Mammary epithelial cell (primary cell): ENCODE measurements at regions of chr10 and their contacts with region 1.

Region 1: DNA sequence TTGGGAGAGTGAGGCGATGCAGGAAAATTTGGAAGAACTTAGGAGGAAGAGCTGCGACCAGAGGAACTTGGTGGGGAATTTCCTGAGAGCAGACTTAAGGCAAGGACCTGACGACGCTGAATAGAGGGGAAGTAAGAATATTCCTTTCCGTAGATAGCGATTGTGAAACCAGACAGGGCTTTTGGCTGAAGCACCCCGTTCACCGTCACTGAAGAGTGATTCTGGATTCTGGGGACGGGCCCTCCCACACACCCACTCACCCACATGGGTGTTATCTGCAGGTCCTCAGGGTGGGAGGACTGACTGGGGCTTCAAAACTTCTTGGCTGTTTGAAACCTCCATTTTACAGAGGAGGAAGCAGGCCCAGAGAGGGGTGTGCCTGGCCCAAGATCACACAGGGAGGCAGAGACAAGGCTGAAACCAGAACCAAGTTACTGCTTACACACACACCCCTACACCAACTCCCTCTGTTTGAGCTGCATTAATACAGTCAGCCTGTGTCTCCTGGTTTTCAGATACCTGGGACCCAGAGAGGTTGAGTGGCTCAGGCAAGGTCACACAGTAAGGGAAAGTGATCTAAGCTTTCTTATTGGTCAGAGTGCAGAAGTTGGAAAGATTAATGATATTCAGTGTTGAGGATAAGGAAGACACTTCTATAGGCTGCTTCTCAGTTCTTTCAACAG is 37.2 kb upstream of the CDH23 start:
- DNase-seq: no peak
- H3K4me3 ChIP-seq: no peak overlapping the region
- H3K27ac ChIP-seq: no peak overlapping the region
- H3K4me1 ChIP-seq: peaks cover 8% of the 10 kb centered on the region
- H3K27me3 ChIP-seq: no peaks in the 10 kb centered on the region
- CTCF ChIP-seq: no peak

Region 2: DNA sequence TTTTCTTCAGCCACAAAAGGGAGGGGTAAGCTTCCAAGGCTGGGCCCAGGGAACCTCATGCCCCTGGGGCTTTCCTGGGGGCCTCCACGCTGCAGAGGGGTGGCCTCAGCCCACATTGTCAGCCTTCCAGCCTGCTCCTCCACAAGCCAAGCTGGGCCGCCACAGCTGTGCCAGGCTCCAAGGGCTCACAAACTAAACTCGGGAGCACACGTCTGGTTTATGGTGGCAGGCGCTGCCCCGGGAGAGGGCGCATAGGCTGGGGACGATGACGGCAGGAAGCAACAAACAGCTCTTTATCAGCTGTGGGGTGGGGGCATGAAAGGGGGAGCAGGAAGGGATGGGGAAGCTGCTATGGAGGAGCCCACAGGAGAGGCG is 30.9 kb after region 1 on chr10:
- CTCF ChIA-PET with region 1: no interaction called
- dilution Hi-C with region 1: loop called (anchors 5 kb)
- in situ Hi-C with region 1: no loop called
- intact Hi-C with region 1: no loop called
- DNase-seq: no peak
- H3K4me3 ChIP-seq: no peak overlapping the region
- H3K27ac ChIP-seq: no peak overlapping the region
- H3K4me1 ChIP-seq: no peaks in the 10 kb centered on the region
- H3K27me3 ChIP-seq: no peaks in the 10 kb centered on the region
- CTCF ChIP-seq: no peak

Region 3: GRCh38 chr10:71465551-71466252 is 106.2 kb after region 1 on chr10:
- CTCF ChIA-PET with region 1: no interaction called
- dilution Hi-C with region 1: loop called (anchors 5 kb)
- in situ Hi-C with region 1: no loop called
- intact Hi-C with region 1: no loop called
- DNase-seq: no peak
- H3K4me3 ChIP-seq: no peak overlapping the region
- H3K27ac ChIP-seq: no peak overlapping the region
- H3K4me1 ChIP-seq: no peaks in the 10 kb centered on the region
- H3K27me3 ChIP-seq: no peaks in the 10 kb centered on the region
- CTCF ChIP-seq: no peak

Region 4: GRCh38 chr10:71888623-71889387 is 529.3 kb after region 1 on chr10:
- CTCF ChIA-PET with region 1: no interaction called
- dilution Hi-C with region 1: loop called (anchors 25 kb)
- in situ Hi-C with region 1: no loop called
- intact Hi-C with region 1: no loop called
- DNase-seq: peak; percentile 78
- H3K4me3 ChIP-seq: peak overlapping the region; percentile 56 to 59 (median 56)
- H3K27ac ChIP-seq: peak overlapping the region; percentile 84
- H3K4me1 ChIP-seq: peaks cover 12% of the 10 kb centered on the region
- H3K27me3 ChIP-seq: no peaks in the 10 kb centered on the region
- CTCF ChIP-seq: no peak